Activated CD4-positive, alpha-beta T cell treated with anti-CD3 and anti-CD28 coated beads, Interleukin-2, amount 10 ng/mL, durations not matched to agents 7 days and 5 days (primary cell): ENCODE measurements at regions of chr17 and their contacts with region 1.

Region 1: GRCh38 chr17:50397111-50397918 is at the start of gene LRRC59:
- DNase-seq: peak; percentile 93
- H3K4me3 Mint-ChIP-seq: peak within 1 kb of the TSS; percentile 80
- H3K27ac Mint-ChIP-seq: peak within 1 kb of the TSS; percentile 89
- H3K4me1 Mint-ChIP-seq: peaks cover 33% of the 10 kb centered on the region
- H3K27me3 Mint-ChIP-seq: no peaks in the 10 kb centered on the region
- total RNA-seq, gene LRRC59: 60.8 to 68.5 TPM

Region 2: GRCh38 chr17:50361561-50362480 is 35.5 kb before region 1 on chr17:
- CTCF ChIA-PET with region 1: interaction called, 34 read pairs
- POLR2A ChIA-PET with region 1: no interaction called
- DNase-seq: peak; percentile 70
- H3K4me3 Mint-ChIP-seq: no peak overlapping the region
- H3K27ac Mint-ChIP-seq: peak overlapping the region; percentile 61
- H3K4me1 Mint-ChIP-seq: peaks cover 8% of the 10 kb centered on the region
- H3K27me3 Mint-ChIP-seq: no peaks in the 10 kb centered on the region

Region 3: GRCh38 chr17:50380369-50381259 is 16.7 kb before region 1 on chr17:
- CTCF ChIA-PET with region 1: interaction called, 76 read pairs
- POLR2A ChIA-PET with region 1: no interaction called
- DNase-seq: no peak
- H3K4me3 Mint-ChIP-seq: no peak overlapping the region
- H3K27ac Mint-ChIP-seq: no peak overlapping the region
- H3K4me1 Mint-ChIP-seq: peaks cover 1% of the 10 kb centered on the region
- H3K27me3 Mint-ChIP-seq: no peaks in the 10 kb centered on the region

Region 4: DNA sequence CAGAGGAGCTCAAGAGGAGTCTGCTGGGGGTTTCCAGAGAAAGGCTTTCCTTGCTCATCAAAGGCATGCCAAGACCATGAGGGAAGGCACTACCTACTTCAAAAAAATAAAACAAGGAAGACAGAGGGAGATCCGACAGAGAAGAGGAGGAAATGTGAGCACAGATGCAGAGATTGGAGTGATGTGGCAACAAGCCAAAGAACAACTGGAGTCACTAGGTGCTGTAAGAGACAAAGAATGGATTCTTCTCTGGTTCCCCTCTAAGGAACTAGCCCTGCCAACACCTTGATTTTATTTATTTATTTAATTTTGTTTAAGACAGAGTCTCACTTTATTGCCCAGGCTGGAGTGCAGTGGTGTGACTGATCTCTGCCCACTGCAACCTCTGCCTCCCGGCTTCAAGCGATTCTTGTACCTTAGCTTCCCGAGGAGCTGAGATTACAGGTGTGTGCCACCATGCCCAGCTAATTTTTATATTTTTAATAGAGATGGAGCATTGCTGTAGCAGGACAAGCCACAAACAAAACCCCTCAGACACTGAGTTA is 14.9 kb after region 1 on chr17:
- CTCF ChIA-PET with region 1: interaction called, 32 read pairs
- POLR2A ChIA-PET with region 1: no interaction called
- DNase-seq: no peak
- H3K4me3 Mint-ChIP-seq: no peak overlapping the region
- H3K27ac Mint-ChIP-seq: no peak overlapping the region
- H3K4me1 Mint-ChIP-seq: no peaks in the 10 kb centered on the region
- H3K27me3 Mint-ChIP-seq: peaks cover 14% of the 10 kb centered on the region

Region 5: GRCh38 chr17:50431233-50431632 is 33.9 kb after region 1 on chr17:
- CTCF ChIA-PET with region 1: interaction called, 15 read pairs
- POLR2A ChIA-PET with region 1: interaction called, 3 read pairs
- DNase-seq: no peak
- H3K4me3 Mint-ChIP-seq: no peak overlapping the region
- H3K27ac Mint-ChIP-seq: no peak overlapping the region
- H3K4me1 Mint-ChIP-seq: peaks cover 18% of the 10 kb centered on the region
- H3K27me3 Mint-ChIP-seq: no peaks in the 10 kb centered on the region